WTC11 (cell line): ENCODE measurements at regions of chr20 and their contacts with region 1.

Region 1: GRCh38 chr20:740141-740540 is 28.2 kb downstream of the SLC52A3 start:
- DNase-seq: no peak
- ATAC-seq: no peak
- H3K4me3 Mint-ChIP-seq: no peak overlapping the region
- H3K27ac Mint-ChIP-seq: no peak overlapping the region
- H3K4me1 Mint-ChIP-seq: peaks cover 7% of the 10 kb centered on the region
- H3K27me3 Mint-ChIP-seq: peaks cover 30% of the 10 kb centered on the region
- CTCF ChIP-seq: no peak

Region 2: DNA sequence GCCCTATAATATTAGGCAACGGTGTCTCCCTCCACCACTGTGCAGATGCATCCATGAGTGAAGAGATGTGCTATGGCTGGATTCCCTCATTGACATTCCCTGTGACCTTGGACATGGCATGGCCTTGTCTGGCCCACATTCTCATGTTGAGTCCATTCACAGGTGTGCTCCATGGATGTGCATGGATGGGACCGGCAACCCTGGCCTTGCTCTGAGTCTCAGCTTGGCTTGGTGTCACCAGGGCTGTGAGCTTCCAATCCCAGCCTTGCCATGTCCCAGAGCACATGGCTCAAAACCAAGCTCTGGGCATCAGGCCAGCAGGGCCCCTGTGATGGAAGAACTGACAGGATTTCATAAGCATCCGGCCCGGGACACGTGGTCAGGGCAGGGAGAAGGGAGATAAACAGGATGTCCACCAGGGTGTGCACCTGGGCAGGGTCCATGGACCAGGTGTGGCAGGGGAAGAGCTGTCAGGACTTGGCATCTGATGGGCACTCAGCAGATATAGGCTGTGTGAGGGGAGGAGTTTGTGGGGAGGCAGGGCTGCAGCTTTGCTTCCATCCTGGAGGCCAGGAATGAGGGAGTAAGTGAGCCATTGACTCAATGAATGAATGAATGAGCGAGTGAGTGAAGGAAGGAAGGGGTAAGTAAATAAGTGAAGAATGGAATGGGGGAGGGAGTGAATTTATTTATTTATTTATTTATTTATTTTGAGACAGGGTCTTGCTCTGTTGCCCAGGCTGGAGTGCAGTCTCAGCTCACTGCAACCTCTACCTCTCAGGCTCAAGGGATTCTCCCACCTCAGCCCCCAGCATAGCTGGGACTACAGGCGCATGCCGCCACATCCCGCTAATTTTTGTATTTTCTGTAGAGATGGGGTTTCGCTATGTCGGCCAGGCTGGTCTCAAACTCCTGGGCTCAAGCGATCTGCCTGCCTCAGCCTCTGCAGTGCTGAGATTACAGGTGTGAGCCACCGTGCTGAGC is 377.6 kb before region 1 on chr20:
- CTCF ChIA-PET with region 1: interaction called, 10 read pairs
- POLR2A ChIA-PET with region 1: no interaction called
- DNase-seq: peak; percentile 57
- ATAC-seq: peak; percentile 71
- H3K4me3 Mint-ChIP-seq: no peak overlapping the region
- H3K27ac Mint-ChIP-seq: no peak overlapping the region
- H3K4me1 Mint-ChIP-seq: peaks cover 23% of the 10 kb centered on the region
- H3K27me3 Mint-ChIP-seq: peaks cover 3% of the 10 kb centered on the region; the same call in 1 of the 2 replicates
- CTCF ChIP-seq: peak; percentile 28; the same call in 1 of the 2 replicates

Region 3: GRCh38 chr20:561437-562231 is 178.5 kb before region 1 on chr20:
- CTCF ChIA-PET with region 1: interaction called, 11 read pairs
- POLR2A ChIA-PET with region 1: no interaction called
- DNase-seq: peak; percentile 83
- ATAC-seq: peak; percentile 96
- H3K4me3 Mint-ChIP-seq: no peak overlapping the region
- H3K27ac Mint-ChIP-seq: no peak overlapping the region
- H3K4me1 Mint-ChIP-seq: no peaks in the 10 kb centered on the region
- H3K27me3 Mint-ChIP-seq: no peaks in the 10 kb centered on the region
- CTCF ChIP-seq: peak; percentile 88

Region 4: DNA sequence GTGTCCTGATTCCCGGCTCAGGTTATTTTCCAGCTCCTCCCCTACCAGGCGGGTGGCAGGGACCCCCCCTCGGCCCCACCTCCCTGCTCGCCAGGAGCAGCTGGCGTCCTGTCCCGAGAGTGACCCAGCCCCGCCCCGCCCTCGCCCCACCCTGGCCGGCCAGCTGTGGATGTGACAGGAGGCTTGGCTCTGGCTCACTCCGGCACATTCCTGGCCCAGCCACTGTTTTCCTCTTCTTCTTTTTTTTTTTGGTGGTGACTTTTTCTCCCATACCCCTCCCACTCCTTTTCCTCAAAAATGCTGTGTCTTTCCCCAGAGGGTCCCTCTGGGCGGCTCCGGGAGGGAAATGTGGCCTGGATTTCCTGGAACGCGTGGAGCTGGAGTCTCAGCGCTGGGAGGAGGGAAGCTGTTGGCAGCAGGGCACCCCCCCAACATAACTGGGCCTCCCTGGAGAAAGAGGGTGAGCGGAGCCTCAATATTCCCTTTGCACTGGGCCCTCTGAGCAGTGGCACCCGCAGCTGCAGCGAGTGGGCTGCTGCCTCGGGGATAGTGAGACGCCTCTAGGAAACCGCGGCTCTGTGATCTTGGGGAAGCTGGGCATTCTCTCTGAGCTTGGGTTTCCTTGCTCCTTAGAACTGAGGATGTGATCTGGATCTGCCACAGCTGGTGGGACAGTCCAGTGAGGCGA is 168.2 kb before region 1 on chr20:
- CTCF ChIA-PET with region 1: interaction called, 13 read pairs
- POLR2A ChIA-PET with region 1: no interaction called
- DNase-seq: peak; percentile 60
- ATAC-seq: peak; percentile 53
- H3K4me3 Mint-ChIP-seq: peak overlapping the region; percentile 22
- H3K27ac Mint-ChIP-seq: no peak overlapping the region
- H3K4me1 Mint-ChIP-seq: peaks cover 56% of the 10 kb centered on the region
- H3K27me3 Mint-ChIP-seq: peaks cover 6% of the 10 kb centered on the region; the same call in 1 of the 2 replicates
- CTCF ChIP-seq: no peak

Region 5: GRCh38 chr20:728248-728944 is 11.7 kb before region 1 on chr20:
- CTCF ChIA-PET with region 1: interaction called, 21 read pairs
- POLR2A ChIA-PET with region 1: no interaction called
- DNase-seq: peak; percentile 88
- ATAC-seq: peak; percentile 89
- H3K4me3 Mint-ChIP-seq: peak overlapping the region; percentile 64
- H3K27ac Mint-ChIP-seq: no peak overlapping the region
- H3K4me1 Mint-ChIP-seq: peaks cover 6% of the 10 kb centered on the region; the same call in 1 of the 2 replicates
- H3K27me3 Mint-ChIP-seq: peaks cover 39% of the 10 kb centered on the region
- CTCF ChIP-seq: peak; percentile 34; the same call in 1 of the 2 replicates

Region 6: DNA sequence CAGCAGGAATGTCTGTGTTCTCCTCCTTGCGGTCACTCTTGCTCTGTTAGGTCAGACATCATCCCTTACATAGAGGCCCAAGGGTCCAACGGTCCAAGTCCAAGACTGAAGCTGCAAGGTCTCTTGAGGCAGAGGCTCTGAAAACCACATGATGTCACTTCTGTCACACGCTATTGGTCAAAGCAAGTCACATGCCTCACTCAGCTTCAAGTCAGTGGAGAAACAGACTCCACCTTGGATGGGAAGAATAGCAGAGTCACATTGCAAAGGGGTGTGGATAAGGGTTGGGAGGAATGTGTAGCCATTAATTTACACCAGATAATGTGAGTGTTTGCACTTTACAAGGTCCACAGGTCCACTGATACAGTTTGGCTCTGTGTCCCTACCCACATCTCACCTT is 10.7 kb after region 1 on chr20:
- CTCF ChIA-PET with region 1: interaction called, 15 read pairs
- POLR2A ChIA-PET with region 1: interaction called, 9 read pairs
- DNase-seq: no peak
- ATAC-seq: no peak; the same call in 1 of the 2 replicates
- H3K4me3 Mint-ChIP-seq: no peak overlapping the region
- H3K27ac Mint-ChIP-seq: no peak overlapping the region
- H3K4me1 Mint-ChIP-seq: peaks cover 5% of the 10 kb centered on the region
- H3K27me3 Mint-ChIP-seq: 0 out of 2 replicates have a peak, but pooled peaks cover under 1% of the 10 kb centered on the region
- CTCF ChIP-seq: no peak

Region 7: DNA sequence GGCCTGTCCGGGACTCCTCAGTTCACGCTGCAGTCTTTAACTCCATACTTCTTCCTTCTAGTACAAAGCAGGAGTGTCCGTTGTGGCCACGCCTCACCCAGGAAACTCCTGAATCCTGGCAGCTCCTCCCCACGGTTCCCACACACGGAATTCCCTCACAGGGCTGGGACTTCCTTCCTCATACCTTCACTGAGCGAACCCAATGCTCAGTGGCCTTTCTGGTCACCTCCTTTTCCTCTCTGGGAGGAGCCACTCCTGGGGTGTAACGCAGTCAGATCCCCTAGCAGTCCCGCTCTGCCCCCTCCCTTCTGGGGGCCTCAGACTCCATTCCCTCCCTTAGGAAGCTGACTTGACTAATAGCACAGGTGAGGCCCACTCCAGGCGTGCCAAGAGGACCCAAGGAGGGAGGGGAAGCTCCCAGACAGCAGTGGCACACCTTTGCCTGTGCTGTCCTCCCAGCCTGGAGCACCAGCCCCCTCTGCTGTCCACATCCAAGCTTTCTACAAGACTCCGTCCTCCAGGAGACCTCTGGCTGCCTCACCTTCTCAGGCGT is 28.4 kb after region 1 on chr20 and contains the start of gene SLC52A3:
- CTCF ChIA-PET with region 1: interaction called, 17 read pairs
- POLR2A ChIA-PET with region 1: no interaction called
- DNase-seq: peak; percentile 73
- ATAC-seq: peak; percentile 96
- H3K4me3 Mint-ChIP-seq: no peak within 1 kb of the TSS
- H3K27ac Mint-ChIP-seq: no peak within 1 kb of the TSS
- H3K4me1 Mint-ChIP-seq: peaks cover 14% of the 10 kb centered on the region
- H3K27me3 Mint-ChIP-seq: no peaks in the 10 kb centered on the region
- CTCF ChIP-seq: no peak
- total RNA-seq, gene SLC52A3: 6.9 to 7.7 TPM (median 7.3 TPM) in 3 replicates

Region 8: GRCh38 chr20:805713-806112 is 65.6 kb after region 1 on chr20:
- CTCF ChIA-PET with region 1: no interaction called
- POLR2A ChIA-PET with region 1: no interaction called
- DNase-seq: no peak
- ATAC-seq: no peak
- H3K4me3 Mint-ChIP-seq: no peak overlapping the region
- H3K27ac Mint-ChIP-seq: no peak overlapping the region
- H3K4me1 Mint-ChIP-seq: no peaks in the 10 kb centered on the region
- H3K27me3 Mint-ChIP-seq: peaks cover 15% of the 10 kb centered on the region
- CTCF ChIP-seq: no peak

Region 9: DNA sequence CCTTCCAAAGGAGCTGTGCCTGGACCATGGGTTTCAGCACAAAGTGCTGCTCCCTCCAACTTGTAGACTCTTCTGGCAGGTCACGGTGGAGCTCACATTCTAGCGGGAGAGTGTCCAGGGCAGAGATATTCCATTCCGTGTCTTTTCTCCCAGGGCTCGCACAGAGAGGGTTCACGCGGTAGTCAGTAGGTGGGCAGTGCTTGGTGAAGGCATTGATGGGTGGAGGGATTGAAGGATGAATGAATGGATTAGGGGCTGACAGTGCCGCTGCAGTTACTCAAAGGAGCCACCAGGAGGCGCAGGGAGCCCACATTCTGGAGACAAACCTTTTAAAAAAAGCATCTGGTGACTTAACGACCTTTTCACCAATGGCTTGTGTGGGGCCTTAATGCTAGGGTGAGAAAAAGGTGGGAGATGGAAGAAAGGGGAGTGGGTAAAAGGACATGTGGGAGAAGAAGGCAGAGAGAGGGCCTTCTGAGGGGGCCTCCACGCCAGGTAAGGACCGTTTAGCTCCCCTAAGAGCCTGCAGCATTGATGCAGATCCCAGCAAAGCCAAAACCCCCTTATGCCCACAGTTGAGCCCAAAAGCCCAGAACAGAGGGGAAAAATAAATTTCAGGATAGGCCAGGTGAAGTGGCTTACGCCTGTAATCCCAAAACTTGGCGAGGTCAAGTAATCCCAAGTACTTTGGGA is 75.9 kb after region 1 on chr20:
- CTCF ChIA-PET with region 1: no interaction called
- POLR2A ChIA-PET with region 1: no interaction called
- DNase-seq: peak; percentile 76
- ATAC-seq: peak; percentile 88
- H3K4me3 Mint-ChIP-seq: 0 out of 2 replicates have a peak overlapping the region, but pooled peaks have one; percentile 9
- H3K27ac Mint-ChIP-seq: no peak overlapping the region
- H3K4me1 Mint-ChIP-seq: peaks cover 4% of the 10 kb centered on the region; the same call in 1 of the 2 replicates
- H3K27me3 Mint-ChIP-seq: peaks cover 2% of the 10 kb centered on the region; the same call in 1 of the 2 replicates
- CTCF ChIP-seq: peak; percentile 99